Endothelial cell of umbilical vein (primary cell): ENCODE measurements at regions of chr4 and their contacts with region 1.

Region 1: GRCh38 chr4:86895692-86896488 is 3.7 kb upstream of the C4orf36 start:
- DNase-seq: peak; percentile 72
- H3K4me3 ChIP-seq: no peak overlapping the region
- H3K27ac ChIP-seq: no peak overlapping the region
- H3K4me1 ChIP-seq: peaks cover 16% of the 10 kb centered on the region
- H3K27me3 ChIP-seq: no peaks in the 10 kb centered on the region
- CTCF ChIP-seq: peak; percentile 46 to 52
- POLR2A ChIP-seq: no peak

Region 2: GRCh38 chr4:86223472-86223871 is 672.4 kb before region 1 on chr4:
- CTCF ChIA-PET with region 1: no interaction called
- POLR2A ChIA-PET with region 1: no interaction called
- dilution Hi-C with region 1: no loop called
- intact Hi-C with region 1: loop called (anchors 10 kb)
- DNase-seq: peak; percentile 18
- H3K4me3 ChIP-seq: no peak overlapping the region
- H3K27ac ChIP-seq: no peak overlapping the region
- H3K4me1 ChIP-seq: peaks cover 9% of the 10 kb centered on the region
- H3K27me3 ChIP-seq: no peaks in the 10 kb centered on the region
- CTCF ChIP-seq: peak; percentile 29 to 51
- POLR2A ChIP-seq: no peak

Region 3: DNA sequence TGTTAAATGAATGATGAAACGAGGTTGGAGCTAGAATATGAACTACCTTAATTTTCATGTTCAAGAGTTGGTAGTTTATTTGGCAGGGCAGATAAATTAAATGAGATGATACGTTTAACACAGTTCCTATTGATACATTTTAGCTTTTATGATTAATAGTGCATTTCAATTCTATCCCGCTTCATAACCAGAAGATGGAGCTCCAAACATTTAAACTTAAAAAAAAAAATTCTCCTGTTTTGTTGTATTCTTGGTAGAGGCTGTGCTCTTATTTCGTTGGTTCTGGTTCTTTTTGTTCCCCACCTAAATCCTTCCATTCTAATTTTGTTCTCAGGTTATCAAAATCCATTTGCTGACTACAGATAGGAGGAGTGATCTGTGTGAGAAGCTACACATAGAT is 373.5 kb before region 1 on chr4:
- CTCF ChIA-PET with region 1: interaction called, 13 read pairs
- POLR2A ChIA-PET with region 1: no interaction called
- dilution Hi-C with region 1: no loop called
- intact Hi-C with region 1: loop called (anchors 1 kb)
- DNase-seq: no peak
- H3K4me3 ChIP-seq: no peak overlapping the region
- H3K27ac ChIP-seq: no peak overlapping the region
- H3K4me1 ChIP-seq: no peaks in the 10 kb centered on the region
- H3K27me3 ChIP-seq: peaks cover 6 to 15% of the 10 kb centered on the region in 2 experiments
- CTCF ChIP-seq: no peak
- POLR2A ChIP-seq: no peak

Region 4: DNA sequence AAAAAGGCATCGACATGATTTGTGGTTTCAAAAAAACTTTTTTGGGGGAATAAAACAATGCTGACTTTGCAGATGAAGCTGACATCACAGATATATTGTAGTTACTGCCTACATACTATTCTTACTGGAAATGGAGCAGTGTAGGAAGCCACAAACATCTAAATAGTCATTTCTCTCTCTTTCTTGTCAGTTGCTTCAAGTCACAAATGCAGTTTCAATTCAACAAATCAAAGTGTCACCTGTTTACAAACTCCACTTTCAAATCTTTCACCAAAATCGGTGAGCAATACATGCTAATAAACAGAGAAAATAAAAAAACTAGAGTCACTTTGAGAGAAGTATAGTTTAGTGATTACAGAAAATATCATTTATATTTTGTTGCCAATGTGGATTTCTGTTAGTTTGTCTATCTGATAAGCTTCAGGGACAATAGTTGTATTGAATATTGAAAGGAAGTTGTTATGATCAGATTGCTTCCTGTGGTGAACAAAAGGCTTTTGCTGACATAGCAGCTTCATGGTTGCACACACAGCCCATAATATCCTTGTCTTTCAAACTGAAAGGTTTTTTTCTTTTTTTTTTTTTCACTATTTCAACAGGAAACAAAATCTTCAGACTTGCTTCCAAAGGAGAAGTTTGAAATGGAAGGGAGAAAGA is 351.5 kb before region 1 on chr4:
- CTCF ChIA-PET with region 1: no interaction called
- POLR2A ChIA-PET with region 1: no interaction called
- dilution Hi-C with region 1: no loop called
- intact Hi-C with region 1: no loop called
- DNase-seq: no peak
- H3K4me3 ChIP-seq: no peak overlapping the region
- H3K27ac ChIP-seq: no peak overlapping the region
- H3K4me1 ChIP-seq: no peaks in the 10 kb centered on the region
- H3K27me3 ChIP-seq: peaks cover 18 to 41% of the 10 kb centered on the region in 2 experiments
- CTCF ChIP-seq: no peak
- POLR2A ChIP-seq: no peak

Region 5: DNA sequence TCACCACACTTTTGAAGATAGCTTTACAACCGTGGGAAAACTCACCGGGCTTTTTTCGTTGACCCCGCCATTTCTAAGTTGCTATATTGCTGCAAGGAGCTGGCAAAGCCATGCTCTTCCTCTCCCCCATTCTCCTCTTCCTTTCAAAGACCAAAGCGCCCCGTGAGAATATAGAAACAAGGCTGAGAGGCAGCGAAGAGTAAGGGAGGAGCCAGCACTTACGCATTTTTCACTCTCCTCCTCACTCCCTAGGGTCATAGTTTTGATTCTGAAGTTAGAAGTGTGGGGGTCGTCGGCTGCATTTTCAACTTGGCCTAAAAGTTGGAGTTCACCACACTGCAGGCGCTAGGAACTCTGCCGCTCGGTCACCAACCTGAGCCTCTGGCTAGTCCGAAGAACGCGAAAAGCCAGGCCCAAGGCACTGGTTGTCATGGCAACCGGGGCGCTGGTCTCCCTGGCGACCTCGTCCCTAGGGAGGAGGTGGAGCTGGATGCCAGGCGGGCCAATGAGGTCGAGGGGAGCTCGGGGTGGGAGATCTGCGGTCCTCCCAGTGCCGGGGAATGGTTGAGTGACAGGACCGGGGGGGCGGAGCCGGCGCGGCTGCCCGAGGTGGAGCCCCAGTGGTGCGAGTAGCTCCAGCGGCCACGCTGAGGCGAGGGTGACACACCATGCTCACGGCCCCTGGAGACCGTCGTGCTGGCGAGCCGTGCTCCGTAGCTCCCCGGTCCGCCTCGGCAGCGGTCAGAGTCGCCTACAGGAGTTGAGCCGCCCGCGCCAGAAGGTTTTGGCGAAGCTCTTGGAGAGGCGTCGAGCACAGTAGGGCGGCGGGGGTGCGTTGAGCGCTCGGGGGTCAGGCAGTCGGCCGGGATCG is 302.0 kb before region 1 on chr4 and contains the start of gene PTPN13:
- CTCF ChIA-PET with region 1: interaction called, 4 read pairs
- POLR2A ChIA-PET with region 1: no interaction called
- dilution Hi-C with region 1: no loop called
- intact Hi-C with region 1: loop called (anchors 1 kb)
- DNase-seq: peak; percentile 98
- H3K4me3 ChIP-seq: peak within 1 kb of the TSS; percentile 38 to 83 (median 70)
- H3K27ac ChIP-seq: no peak within 1 kb of the TSS
- H3K4me1 ChIP-seq: peaks cover 12% of the 10 kb centered on the region
- H3K27me3 ChIP-seq: no peaks in the 10 kb centered on the region
- CTCF ChIP-seq: no peak
- POLR2A ChIP-seq: peak; percentile 43
- total RNA-seq, gene PTPN13: 2.2 and 2.9 TPM in 2 replicates

Region 6: GRCh38 chr4:86653237-86653865 is 242.5 kb before region 1 on chr4:
- CTCF ChIA-PET with region 1: interaction called, 7 read pairs
- POLR2A ChIA-PET with region 1: no interaction called
- dilution Hi-C with region 1: no loop called
- intact Hi-C with region 1: loop called (anchors 1 kb)
- DNase-seq: peak; percentile 21
- H3K4me3 ChIP-seq: no peak overlapping the region
- H3K27ac ChIP-seq: no peak overlapping the region
- H3K4me1 ChIP-seq: no peaks in the 10 kb centered on the region
- H3K27me3 ChIP-seq: no peaks in the 10 kb centered on the region
- CTCF ChIP-seq: peak; percentile 52 to 73
- POLR2A ChIP-seq: no peak

Region 7: GRCh38 chr4:86845593-86845992 is 50.3 kb before region 1 on chr4:
- CTCF ChIA-PET with region 1: no interaction called
- POLR2A ChIA-PET with region 1: interaction called, 5 read pairs
- dilution Hi-C with region 1: no loop called
- intact Hi-C with region 1: loop called (anchors 2 kb)
- DNase-seq: peak; percentile 95
- H3K4me3 ChIP-seq: no peak overlapping the region
- H3K27ac ChIP-seq: no peak overlapping the region
- H3K4me1 ChIP-seq: peaks cover 14% of the 10 kb centered on the region
- H3K27me3 ChIP-seq: peaks cover 0 to 2% of the 10 kb centered on the region in 2 experiments
- CTCF ChIP-seq: no peak
- POLR2A ChIP-seq: no peak

Region 8: DNA sequence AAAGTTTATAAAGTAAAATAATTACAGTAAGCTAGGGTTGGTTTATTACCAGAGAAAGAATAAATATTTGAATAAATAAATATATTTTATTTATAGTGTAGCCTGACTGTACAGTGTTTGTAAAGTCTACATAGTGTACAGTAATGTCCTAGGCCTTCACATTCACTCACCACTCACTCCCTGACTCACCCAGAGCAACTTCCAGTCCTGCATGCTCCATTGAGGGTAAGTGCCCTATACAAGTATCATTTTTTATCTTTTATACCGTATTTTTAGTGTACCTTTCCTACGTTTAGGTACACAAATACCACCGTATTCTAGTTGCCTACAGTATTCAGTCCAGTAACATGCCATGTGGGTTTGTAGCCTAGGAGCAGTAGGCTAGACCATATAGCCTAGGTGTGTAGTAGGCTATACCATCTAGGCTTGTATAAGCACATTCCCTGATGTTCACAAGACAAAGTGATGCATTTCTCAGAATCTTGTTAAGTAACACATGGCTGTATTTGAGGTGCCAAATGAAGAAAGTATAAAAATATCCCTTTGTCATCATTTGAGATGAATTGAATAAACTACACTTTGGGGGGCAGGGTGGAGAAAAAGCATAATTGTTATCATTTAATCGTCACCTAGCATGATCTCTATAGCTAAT is 339.3 kb after region 1 on chr4:
- CTCF ChIA-PET with region 1: interaction called, 3 read pairs
- POLR2A ChIA-PET with region 1: no interaction called
- dilution Hi-C with region 1: no loop called
- intact Hi-C with region 1: loop called (anchors 5 kb)
- DNase-seq: no peak
- H3K4me3 ChIP-seq: peak overlapping the region in 2 of 3 experiments; percentile 74 to 96
- H3K27ac ChIP-seq: no peak overlapping the region
- H3K4me1 ChIP-seq: peaks cover 2% of the 10 kb centered on the region
- H3K27me3 ChIP-seq: peaks cover 0 to 6% of the 10 kb centered on the region in 2 experiments
- CTCF ChIP-seq: no peak
- POLR2A ChIP-seq: no peak